Panc1 (cell line): ENCODE measurements at regions of chr17 and their contacts with region 1.

Region 1: DNA sequence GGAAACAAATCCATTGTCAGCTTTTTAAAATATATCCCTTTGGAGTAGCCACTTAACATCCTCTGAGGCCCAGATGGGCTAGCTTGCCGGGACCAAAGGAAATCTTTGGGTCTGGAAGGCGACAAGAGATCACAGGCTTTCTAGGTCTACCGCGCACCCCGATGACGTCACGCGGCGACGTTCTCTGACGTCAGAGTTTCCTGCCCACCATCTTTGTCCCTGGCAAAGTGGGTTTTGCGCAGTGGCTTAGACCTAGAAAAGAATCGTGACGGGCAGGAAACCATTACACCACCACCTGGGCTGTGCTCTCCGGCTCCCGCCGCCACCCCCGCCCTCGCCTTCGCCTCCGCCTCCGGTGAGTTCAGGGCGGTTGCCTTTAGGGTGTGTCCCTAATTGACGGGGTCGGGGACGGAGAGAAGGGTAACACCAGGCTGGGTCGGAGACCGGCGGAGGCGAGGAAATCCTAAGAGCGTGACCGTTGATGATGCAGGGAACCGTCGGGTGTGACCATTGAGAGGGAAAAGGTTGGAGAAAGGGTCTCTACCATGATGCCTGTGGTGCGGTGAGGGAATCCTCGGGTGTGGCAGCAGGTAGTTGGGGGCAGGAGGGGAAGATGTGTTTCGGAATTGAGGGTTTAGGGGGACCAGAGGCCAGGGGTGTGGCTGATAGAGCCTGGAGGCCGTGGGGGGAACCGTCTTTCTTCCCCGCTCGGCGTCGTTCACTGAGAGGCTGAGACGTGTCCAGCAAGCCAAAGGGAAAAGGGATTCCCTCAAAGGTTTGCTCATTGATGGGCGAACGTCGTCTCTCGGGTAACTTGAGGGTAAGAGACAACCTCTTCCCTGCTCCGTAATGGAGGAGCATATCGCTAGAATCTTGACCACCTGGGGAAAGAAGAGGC is at the start of gene AP2B1:
- DNase-seq: peak; percentile 92
- ATAC-seq: peak; percentile 91
- H3K4me3 ChIP-seq: peak within 1 kb of the TSS; percentile 71 to 95
- H3K27ac ChIP-seq: peak within 1 kb of the TSS; percentile 97
- H3K4me1 ChIP-seq: peaks cover 24% of the 10 kb centered on the region
- H3K27me3 ChIP-seq: no peaks in the 10 kb centered on the region
- CTCF ChIP-seq: no peak
- total RNA-seq, gene AP2B1: 446 TPM

Region 2: GRCh38 chr17:35607239-35607847 is 20.0 kb after region 1 on chr17:
- CTCF ChIA-PET with region 1: no interaction called
- POLR2A ChIA-PET with region 1: interaction called, 14 read pairs
- in situ Hi-C with region 1: no loop called
- intact Hi-C with region 1: no loop called
- DNase-seq: no peak
- ATAC-seq: no peak
- H3K4me3 ChIP-seq: no peak overlapping the region
- H3K27ac ChIP-seq: no peak overlapping the region
- H3K4me1 ChIP-seq: no peaks in the 10 kb centered on the region
- H3K27me3 ChIP-seq: no peaks in the 10 kb centered on the region
- CTCF ChIP-seq: no peak

Region 3: GRCh38 chr17:35630530-35631148 is 43.3 kb after region 1 on chr17:
- CTCF ChIA-PET with region 1: no interaction called
- POLR2A ChIA-PET with region 1: interaction called, 12 read pairs
- in situ Hi-C with region 1: no loop called
- intact Hi-C with region 1: no loop called
- DNase-seq: peak; percentile 32
- ATAC-seq: peak; percentile 59; the same call in 1 of the 2 replicates
- H3K4me3 ChIP-seq: no peak overlapping the region
- H3K27ac ChIP-seq: no peak overlapping the region
- H3K4me1 ChIP-seq: peaks cover 7% of the 10 kb centered on the region; the same call in 1 of the 2 replicates
- H3K27me3 ChIP-seq: no peaks in the 10 kb centered on the region
- CTCF ChIP-seq: no peak